A549 (cell line): ENCODE measurements at regions of chr2 and their contacts with region 1.

Region 1: DNA sequence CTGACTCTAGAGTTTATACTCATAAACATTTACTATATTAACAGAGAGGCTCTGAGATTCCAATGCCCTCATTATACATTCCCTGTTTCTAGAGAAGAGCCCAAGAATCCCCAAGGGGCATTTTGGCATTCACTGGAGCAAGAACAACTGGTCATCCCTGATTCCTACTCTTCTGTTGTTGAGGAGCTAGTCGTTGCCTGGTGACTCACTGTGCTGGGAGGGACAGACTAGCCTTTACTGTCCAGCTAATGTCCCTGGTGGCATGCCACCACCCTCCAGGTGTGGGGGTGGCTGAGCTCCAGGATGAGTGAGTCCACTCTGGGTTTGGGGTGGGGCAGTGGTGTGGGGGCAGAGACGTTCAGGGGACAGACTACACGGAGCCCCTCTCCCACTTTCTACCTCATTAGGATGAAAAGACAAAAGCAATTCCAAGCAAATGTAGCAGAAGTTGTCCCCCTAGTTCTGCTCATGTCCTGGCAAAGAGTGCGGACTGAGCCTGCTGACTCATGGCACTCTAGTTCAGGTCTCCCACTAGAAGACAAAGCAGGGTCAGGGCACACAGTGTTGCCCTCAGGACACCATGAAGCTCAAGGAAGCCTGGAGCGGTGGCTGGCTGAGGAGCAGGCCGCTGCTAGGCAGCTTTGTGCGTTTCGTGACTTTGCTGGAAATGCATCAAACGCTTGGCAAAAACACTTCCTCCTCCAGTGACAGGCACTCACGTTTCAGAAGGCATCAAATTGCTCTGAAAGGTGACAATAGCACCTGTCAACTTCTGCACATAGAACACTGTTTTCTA is 49.4 kb downstream of the RHOB start:
- DNase-seq: peak; percentile 40 to 43
- ATAC-seq: peak; percentile 57 to 63; a peak in 4 of 6 replicates
- H3K4me3 ChIP-seq: no peak overlapping the region
- H3K27ac ChIP-seq: peak overlapping the region; percentile 43 to 70
- H3K4me1 ChIP-seq: peaks cover 40% of the 10 kb centered on the region
- CTCF ChIP-seq: no peak
- EP300 ChIP-seq: no peak
- POLR2A ChIP-seq: no peak
- RAD21 ChIP-seq: no peak

Region 2: GRCh38 chr2:20514596-20515269 is 18.5 kb after region 1 on chr2:
- CTCF ChIA-PET with region 1: interaction called, 11 read pairs
- POLR2A ChIA-PET with region 1: no interaction called
- DNase-seq: peak in 1 of 2 experiments; percentile 44
- ATAC-seq: peak; percentile 55 to 61; a peak in 4 of 6 replicates
- H3K4me3 ChIP-seq: no peak overlapping the region
- H3K27ac ChIP-seq: peak overlapping the region; percentile 19 to 47; a peak in 5 of 6 replicates
- H3K4me1 ChIP-seq: peaks cover 27% of the 10 kb centered on the region
- CTCF ChIP-seq: no peak
- EP300 ChIP-seq: no peak
- POLR2A ChIP-seq: no peak
- RAD21 ChIP-seq: no peak